ENCODE measurements at regions of chr5 and their contacts with region 1.

Region 1: GRCh38 chr5:164065266-164065665 is 559.8 kb downstream of the MAT2B start:
- DNase-seq: no peak
- ATAC-seq: no peak
- H3K4me3 ChIP-seq: no peak overlapping the region
- H3K27ac ChIP-seq: no peak overlapping the region
- H3K4me1 ChIP-seq: no peaks in the 10 kb centered on the region
- H3K27me3 ChIP-seq: no peaks in the 10 kb centered on the region
- CTCF ChIP-seq: no peak

Region 2: DNA sequence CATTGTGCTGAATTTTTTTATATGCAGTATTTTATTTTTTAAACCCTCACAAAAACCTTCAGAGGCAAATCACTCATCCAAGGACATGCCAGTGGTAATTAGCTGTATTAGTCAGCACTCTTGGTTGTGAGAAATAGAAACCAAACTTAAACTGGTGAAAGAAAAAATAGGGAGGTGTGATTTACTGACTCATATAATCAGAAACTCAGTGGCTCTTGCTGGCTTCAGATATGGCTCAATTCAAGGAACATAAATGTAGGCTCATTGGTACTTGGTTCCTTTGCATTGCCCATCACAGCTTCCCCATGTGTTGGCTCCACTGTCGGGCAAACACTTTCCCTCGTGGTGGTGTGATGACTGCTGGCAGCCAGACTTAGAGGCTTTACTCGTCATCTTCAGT is 62.6 kb before region 1 on chr5:
- CTCF ChIA-PET with region 1: no interaction called
- POLR2A ChIA-PET with region 1: interaction called, 16 read pairs
- in situ Hi-C with region 1: no loop called
- intact Hi-C with region 1: no loop called
- DNase-seq: no peak
- ATAC-seq: no peak
- H3K4me3 ChIP-seq: no peak overlapping the region
- H3K27ac ChIP-seq: no peak overlapping the region
- H3K4me1 ChIP-seq: no peaks in the 10 kb centered on the region
- H3K27me3 ChIP-seq: no peaks in the 10 kb centered on the region
- CTCF ChIP-seq: no peak